Mammary epithelial cell (primary cell): ENCODE measurements at regions of chr3 and their contacts with region 1.

Region 1: DNA sequence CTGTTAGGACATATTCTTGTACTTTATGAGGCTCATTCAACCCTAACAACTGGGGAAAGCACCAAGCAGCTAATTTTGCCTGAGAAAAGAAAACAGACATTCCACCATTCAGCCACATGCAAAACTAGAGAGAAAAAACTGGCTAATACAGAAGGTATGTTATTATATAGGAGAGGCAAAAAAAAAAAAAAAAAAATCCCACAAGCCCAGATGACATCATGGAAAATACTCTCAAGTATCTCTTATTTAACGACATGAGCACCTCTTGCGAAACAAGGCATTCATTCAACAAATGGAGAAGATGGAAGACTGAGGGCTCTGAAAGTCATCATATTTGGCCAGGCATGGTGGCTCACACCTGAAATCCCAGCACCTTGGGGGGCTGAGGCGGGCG is 61.5 kb downstream of the PRICKLE2 start:
- DNase-seq: peak; percentile 92
- H3K4me3 ChIP-seq: peak overlapping the region; percentile 5 to 21 (median 9)
- H3K27ac ChIP-seq: peak overlapping the region; percentile 94
- H3K4me1 ChIP-seq: peaks cover 63% of the 10 kb centered on the region
- H3K27me3 ChIP-seq: no peaks in the 10 kb centered on the region
- CTCF ChIP-seq: no peak

Region 2: DNA sequence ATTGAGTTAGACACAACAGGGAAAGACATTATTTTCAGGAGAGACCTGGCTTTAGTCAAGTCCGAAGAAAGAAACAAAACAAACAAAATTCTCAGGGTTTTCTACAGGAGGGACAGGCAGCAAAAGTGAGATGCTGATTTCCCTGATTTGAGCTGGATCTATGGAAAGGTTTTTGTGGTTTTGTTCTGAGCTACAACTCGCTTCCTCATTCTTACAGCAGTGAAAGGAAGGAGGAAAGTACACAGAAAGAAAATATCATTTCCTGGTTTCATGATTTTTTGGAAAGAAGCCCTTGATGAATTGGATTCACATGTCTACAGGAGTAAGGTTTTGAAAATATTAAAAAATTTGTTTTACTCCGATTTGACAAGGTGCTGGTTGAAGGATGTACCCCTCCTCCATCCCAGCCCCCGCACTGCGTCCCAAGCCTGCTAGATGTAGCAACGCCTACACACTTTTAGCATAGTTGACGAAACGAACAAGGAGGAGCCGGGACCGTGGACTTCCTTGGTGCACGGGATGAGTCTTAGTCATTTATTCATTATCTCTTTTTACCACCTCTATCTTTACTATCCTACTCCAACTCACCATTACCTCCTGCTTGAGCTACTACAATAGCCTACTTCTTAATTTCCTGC is 50.7 kb after region 1 on chr3:
- CTCF ChIA-PET with region 1: no interaction called
- dilution Hi-C with region 1: no loop called
- in situ Hi-C with region 1: no loop called
- intact Hi-C with region 1: loop called (anchors 1 kb)
- DNase-seq: peak; percentile 65
- H3K4me3 ChIP-seq: peak overlapping the region; percentile 28 to 46 (median 44)
- H3K27ac ChIP-seq: peak overlapping the region; percentile 83
- H3K4me1 ChIP-seq: peaks cover 55% of the 10 kb centered on the region
- H3K27me3 ChIP-seq: no peaks in the 10 kb centered on the region
- CTCF ChIP-seq: no peak

Region 3: DNA sequence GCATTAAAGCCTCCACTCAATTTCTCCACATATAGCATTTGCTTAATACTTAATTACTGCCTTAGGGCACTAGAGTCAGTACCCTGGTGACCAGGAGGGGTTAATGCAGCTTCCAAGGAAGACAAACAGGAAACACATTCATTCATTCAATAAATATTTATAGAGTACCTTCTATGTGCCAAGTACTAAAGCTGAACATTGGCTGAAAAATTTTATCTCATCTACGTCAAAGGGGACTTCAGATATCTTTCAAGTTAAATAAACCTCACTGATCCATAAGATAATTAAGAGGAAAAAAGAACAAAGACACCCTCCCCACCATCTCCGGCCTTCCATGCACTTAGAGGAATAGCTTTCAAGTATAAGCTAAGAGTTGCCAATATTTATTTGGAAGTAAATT is 218.4 kb after region 1 on chr3:
- CTCF ChIA-PET with region 1: no interaction called
- dilution Hi-C with region 1: no loop called
- in situ Hi-C with region 1: no loop called
- intact Hi-C with region 1: no loop called
- DNase-seq: no peak
- H3K4me3 ChIP-seq: no peak overlapping the region
- H3K27ac ChIP-seq: no peak overlapping the region
- H3K4me1 ChIP-seq: no peaks in the 10 kb centered on the region
- H3K27me3 ChIP-seq: no peaks in the 10 kb centered on the region
- CTCF ChIP-seq: no peak

Region 4: DNA sequence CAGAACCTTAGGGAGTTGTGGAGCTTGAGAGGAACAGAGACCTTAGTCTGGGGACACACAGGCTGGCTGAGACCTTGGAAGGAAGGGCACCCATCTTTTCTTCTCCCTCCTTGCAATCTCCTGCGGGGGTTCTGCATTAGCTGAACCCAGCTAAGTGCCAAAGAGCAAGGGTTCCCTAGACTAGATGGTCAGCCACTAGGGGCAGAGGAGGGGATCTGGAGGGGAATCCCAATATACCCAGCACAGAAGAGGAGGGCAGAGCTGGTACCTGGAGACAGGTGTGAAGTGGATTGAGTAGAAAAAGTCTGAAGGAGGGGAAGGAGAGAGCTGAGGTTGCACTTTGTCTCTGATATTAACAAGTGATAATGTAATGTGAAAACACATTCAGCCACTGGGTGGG is 311.3 kb after region 1 on chr3:
- CTCF ChIA-PET with region 1: no interaction called
- dilution Hi-C with region 1: no loop called
- in situ Hi-C with region 1: no loop called
- intact Hi-C with region 1: no loop called
- DNase-seq: no peak
- H3K4me3 ChIP-seq: no peak overlapping the region
- H3K27ac ChIP-seq: no peak overlapping the region
- H3K4me1 ChIP-seq: no peaks in the 10 kb centered on the region
- H3K27me3 ChIP-seq: no peaks in the 10 kb centered on the region
- CTCF ChIP-seq: no peak